B cell (primary cell): ENCODE measurements at regions of chr1 and their contacts with region 1.

Region 1: DNA sequence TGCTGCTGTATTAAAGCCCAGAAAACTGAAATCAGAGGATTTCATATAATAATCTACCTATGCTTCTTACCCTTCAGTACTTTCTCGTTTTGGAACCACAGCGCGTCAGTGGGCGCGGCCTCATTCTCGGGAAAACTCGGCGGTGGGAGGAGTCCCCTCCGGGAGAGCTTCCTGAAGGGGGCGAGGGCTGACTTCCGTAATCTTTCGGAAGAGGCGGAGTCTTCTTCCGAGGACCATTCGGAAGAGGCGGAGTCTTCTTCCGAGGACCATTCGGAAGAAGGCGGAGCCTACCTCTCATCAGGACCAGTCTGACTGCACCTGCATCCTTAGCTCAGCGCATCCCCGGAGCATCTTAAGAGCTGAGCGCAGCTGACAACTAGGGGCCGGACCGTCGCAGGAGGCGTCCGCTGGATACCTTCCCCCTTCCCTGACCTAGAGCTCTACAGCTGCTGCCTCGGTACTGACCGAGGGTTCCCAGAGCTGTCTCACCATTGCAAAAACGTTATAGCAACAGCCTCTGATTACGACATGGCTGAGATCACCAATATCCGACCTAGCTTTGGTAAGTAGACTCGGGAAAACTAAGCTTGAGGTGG is at the start of gene SYT11:
- DNase-seq: peak; percentile 96
- ATAC-seq: peak; percentile 94
- H3K4me3 ChIP-seq: peak within 1 kb of the TSS; percentile 39 to 89 (median 65)
- H3K4me3 Mint-ChIP-seq: peak within 1 kb of the TSS; percentile 97
- H3K27ac ChIP-seq: peak within 1 kb of the TSS; percentile 60 to 68
- H3K27ac Mint-ChIP-seq: peak within 1 kb of the TSS; percentile 96
- H3K4me1 ChIP-seq: peaks cover 12 to 40% of the 10 kb centered on the region in 2 donors
- H3K4me1 Mint-ChIP-seq: peaks cover 29% of the 10 kb centered on the region
- H3K27me3 ChIP-seq: peaks cover 0 to 4% (median 2%) of the 10 kb centered on the region in 4 experiments
- H3K27me3 Mint-ChIP-seq: peaks cover 11% of the 10 kb centered on the region
- CTCF ChIP-seq: peak; percentile 31
- total RNA-seq, gene SYT11: 6.2 and 6.6 TPM in 2 replicates

Region 2: DNA sequence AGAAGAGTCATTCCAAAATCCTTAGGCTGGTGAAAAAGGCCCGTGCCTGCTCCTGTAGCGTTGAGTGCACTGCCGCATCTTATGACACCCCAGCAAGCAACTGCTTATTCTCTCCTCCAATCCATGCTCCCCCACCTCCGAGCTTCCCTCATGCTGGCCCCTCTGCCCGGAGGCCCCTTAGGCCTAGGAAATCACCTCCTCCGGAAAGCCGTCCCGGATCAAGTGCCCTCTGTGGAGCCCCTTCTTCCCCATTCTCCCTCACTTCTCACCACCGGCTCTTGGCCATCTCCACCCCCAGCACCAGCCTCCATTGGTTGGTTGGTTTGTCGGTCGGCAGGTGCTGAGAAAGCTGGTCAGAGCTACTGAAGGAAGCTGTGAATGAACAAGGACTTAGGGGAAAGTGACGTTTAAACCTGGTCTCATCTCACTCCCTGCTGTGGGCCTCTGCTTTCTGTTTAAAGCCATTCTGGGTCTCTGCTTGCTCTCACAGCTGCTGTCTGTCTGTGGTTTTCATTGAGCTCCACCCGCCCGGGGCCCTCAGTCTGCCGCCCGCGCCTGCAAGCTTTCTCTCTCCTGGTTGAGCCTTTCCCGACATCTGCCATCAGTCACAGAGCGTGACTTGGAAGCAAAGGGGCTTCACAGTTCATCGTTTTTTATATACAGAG is 1111.5 kb before region 1 on chr1:
- CTCF ChIA-PET with region 1: no interaction called
- POLR2A ChIA-PET with region 1: no interaction called
- intact Hi-C with region 1: no loop called
- DNase-seq: peak; percentile 35
- ATAC-seq: peak; percentile 14
- H3K4me3 ChIP-seq: no peak overlapping the region
- H3K4me3 Mint-ChIP-seq: peak overlapping the region; percentile 32
- H3K27ac ChIP-seq: no peak overlapping the region
- H3K27ac Mint-ChIP-seq: no peak overlapping the region
- H3K4me1 ChIP-seq: peaks cover 14 to 18% of the 10 kb centered on the region in 2 donors
- H3K4me1 Mint-ChIP-seq: peaks cover 13% of the 10 kb centered on the region
- H3K27me3 ChIP-seq: peaks cover 0 to 32% (median 6%) of the 10 kb centered on the region in 4 experiments
- H3K27me3 Mint-ChIP-seq: peaks cover 65% of the 10 kb centered on the region
- CTCF ChIP-seq: no peak

Region 3: GRCh38 chr1:154936555-154937084 is 922.7 kb before region 1 on chr1 and contains the start of gene PMVK:
- CTCF ChIA-PET with region 1: no interaction called
- POLR2A ChIA-PET with region 1: no interaction called
- intact Hi-C with region 1: loop called (anchors 5 kb)
- DNase-seq: peak; percentile 99
- ATAC-seq: peak; percentile 89
- H3K4me3 ChIP-seq: peak within 1 kb of the TSS; percentile 76 to 90 (median 80)
- H3K4me3 Mint-ChIP-seq: peak within 1 kb of the TSS; percentile 97
- H3K27ac ChIP-seq: peak within 1 kb of the TSS; percentile 98
- H3K27ac Mint-ChIP-seq: peak within 1 kb of the TSS; percentile 100
- H3K4me1 ChIP-seq: peaks cover 32 to 50% of the 10 kb centered on the region in 2 donors
- H3K4me1 Mint-ChIP-seq: peaks cover 51% of the 10 kb centered on the region
- H3K27me3 ChIP-seq: no peaks in the 10 kb centered on the region
- H3K27me3 Mint-ChIP-seq: no peaks in the 10 kb centered on the region
- CTCF ChIP-seq: peak; percentile 40
- total RNA-seq, gene PMVK: 15.0 TPM in 2 replicates

Region 4: DNA sequence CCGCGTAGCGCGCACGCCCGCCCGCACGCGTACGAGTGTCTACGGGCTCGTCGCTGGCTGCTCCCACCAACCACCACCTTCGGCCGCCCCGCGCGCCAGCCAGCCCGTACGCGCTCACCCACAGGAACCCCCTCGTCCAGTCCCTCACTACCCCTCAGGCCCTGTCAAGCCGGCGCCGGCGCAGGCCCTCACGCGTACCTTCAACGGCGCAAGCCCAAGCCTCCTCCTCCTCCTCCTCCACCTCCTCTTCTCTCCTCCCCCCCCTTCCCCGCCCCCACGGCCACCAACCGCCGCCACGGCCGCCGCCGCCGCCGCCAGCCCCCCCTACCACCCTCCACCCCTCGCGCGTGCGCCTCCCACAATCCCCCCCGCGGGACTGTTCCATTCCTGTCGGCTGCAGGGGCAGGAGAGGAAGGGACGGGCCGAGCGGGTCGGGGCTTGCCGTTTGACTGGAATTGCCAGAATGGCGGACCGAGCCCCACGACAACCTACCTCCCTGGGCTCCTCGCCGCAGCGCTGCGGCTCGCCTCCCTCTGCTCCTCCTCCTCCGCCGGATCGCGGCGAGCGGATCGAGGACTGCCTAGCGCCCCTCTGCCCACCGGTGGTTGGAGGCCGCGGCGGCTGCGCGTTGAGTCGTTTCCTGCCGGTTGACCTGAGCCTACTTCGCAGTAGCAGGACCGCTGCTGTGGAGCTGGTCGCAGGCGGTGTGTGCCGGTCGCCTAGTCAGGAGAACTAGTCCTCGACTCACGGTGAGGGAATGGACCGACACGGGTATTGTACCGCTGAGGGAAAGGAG is 296.6 kb before region 1 on chr1 and contains the start of gene ASH1L:
- CTCF ChIA-PET with region 1: no interaction called
- POLR2A ChIA-PET with region 1: no interaction called
- intact Hi-C with region 1: loop called (anchors 5 kb)
- DNase-seq: peak; percentile 98
- ATAC-seq: peak; percentile 76
- H3K4me3 ChIP-seq: peak within 1 kb of the TSS; percentile 83 to 96 (median 92)
- H3K4me3 Mint-ChIP-seq: peak within 1 kb of the TSS; percentile 99
- H3K27ac ChIP-seq: peak within 1 kb of the TSS; percentile 96 to 97
- H3K27ac Mint-ChIP-seq: peak within 1 kb of the TSS; percentile 98
- H3K4me1 ChIP-seq: peaks cover 19 to 27% of the 10 kb centered on the region in 2 donors
- H3K4me1 Mint-ChIP-seq: peaks cover 45% of the 10 kb centered on the region
- H3K27me3 ChIP-seq: no peaks in the 10 kb centered on the region
- H3K27me3 Mint-ChIP-seq: no peaks in the 10 kb centered on the region
- CTCF ChIP-seq: no peak
- total RNA-seq, gene ASH1L: 124 and 128 TPM in 2 replicates

Region 5: DNA sequence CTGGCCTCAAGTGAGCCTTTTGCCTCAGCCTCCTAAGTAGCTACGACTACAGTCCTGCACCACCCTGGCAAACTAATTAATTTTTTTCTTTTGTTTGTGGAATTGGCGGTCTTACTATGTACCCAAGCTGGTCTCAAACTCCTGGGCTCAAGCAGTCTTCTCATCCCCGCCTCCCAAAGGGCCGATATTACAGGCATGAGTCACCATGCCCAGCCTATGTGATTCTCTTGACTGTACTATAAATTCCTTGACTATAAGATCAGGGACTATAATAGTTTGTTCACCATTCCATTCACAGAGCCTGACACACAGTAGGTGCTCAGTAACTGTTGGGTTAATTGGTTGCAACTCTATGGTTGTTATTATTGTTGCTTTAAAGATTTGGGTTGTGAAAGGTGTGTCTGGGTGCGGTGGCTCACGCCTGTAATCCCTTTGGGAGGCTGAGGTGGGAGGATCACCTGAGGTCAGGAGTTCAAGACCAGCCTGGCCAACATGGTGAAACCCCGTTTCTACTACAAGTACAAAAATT is 153.2 kb before region 1 on chr1:
- CTCF ChIA-PET with region 1: no interaction called
- POLR2A ChIA-PET with region 1: interaction called, 11 read pairs
- intact Hi-C with region 1: no loop called
- DNase-seq: no peak
- ATAC-seq: no peak
- H3K4me3 ChIP-seq: no peak overlapping the region
- H3K4me3 Mint-ChIP-seq: no peak overlapping the region
- H3K27ac ChIP-seq: no peak overlapping the region
- H3K27ac Mint-ChIP-seq: no peak overlapping the region
- H3K4me1 ChIP-seq: no peaks in the 10 kb centered on the region
- H3K4me1 Mint-ChIP-seq: peaks cover 8% of the 10 kb centered on the region
- H3K27me3 ChIP-seq: no peaks in the 10 kb centered on the region
- H3K27me3 Mint-ChIP-seq: no peaks in the 10 kb centered on the region
- CTCF ChIP-seq: no peak

Region 6: DNA sequence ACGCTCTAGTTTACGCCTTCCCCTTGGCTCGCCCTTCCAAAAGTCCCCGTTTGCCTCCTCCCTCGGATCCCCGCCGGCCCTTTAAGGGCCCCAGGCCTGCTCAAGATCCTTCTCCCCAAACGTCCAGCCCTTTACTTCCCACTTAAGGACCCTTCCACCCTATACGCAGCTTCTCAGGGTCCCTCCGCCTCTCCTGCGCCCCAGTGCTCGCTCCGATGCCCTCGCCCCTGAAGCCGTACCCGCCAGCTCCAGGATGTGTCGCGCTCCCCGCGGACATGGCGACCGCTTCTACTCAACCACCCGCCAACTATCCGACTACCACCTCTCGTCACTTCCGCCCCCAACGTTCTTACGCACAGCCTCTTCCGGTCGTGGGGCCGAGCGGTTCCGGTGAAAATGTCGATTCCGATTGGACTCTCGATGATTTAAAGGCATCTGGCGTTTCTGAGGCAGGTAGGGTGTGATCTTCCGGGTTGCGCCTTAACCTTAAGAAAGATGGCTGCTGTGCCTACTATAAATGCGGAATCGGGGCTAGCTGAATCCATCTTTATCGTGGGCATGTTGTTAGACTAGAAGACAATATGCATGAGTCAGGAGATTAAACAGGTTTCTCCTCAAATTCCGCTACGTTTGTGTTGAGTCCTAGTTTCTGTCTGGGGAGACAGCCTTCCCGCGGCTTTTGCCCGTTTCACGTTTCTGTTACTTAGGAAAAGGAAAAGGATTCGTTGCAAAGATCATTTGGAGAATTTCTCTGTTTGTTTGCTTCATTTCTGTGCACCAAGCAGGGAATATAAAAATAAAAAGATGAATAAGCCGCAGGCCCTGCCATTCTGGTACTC is 75.0 kb after region 1 on chr1 and contains the start of gene KHDC4:
- CTCF ChIA-PET with region 1: interaction called, 3 read pairs
- POLR2A ChIA-PET with region 1: no interaction called
- intact Hi-C with region 1: loop called (anchors 1 kb)
- DNase-seq: peak; percentile 98
- ATAC-seq: peak; percentile 93
- H3K4me3 ChIP-seq: peak within 1 kb of the TSS; percentile 79 to 97 (median 84)
- H3K4me3 Mint-ChIP-seq: no peak within 1 kb of the TSS
- H3K27ac ChIP-seq: peak within 1 kb of the TSS; percentile 86 to 89
- H3K27ac Mint-ChIP-seq: peak within 1 kb of the TSS; percentile 54
- H3K4me1 ChIP-seq: peaks cover 43 to 55% of the 10 kb centered on the region in 2 donors
- H3K4me1 Mint-ChIP-seq: peaks cover 37% of the 10 kb centered on the region
- H3K27me3 ChIP-seq: no peaks in the 10 kb centered on the region
- H3K27me3 Mint-ChIP-seq: no peaks in the 10 kb centered on the region
- CTCF ChIP-seq: peak; percentile 57
- total RNA-seq, gene KHDC4: 122 TPM in 2 replicates

Region 7: GRCh38 chr1:156020292-156021089 is 161.2 kb after region 1 on chr1 and contains the start of gene SSR2:
- CTCF ChIA-PET with region 1: no interaction called
- POLR2A ChIA-PET with region 1: no interaction called
- intact Hi-C with region 1: loop called (anchors 2 kb)
- DNase-seq: peak; percentile 89
- ATAC-seq: peak; percentile 99
- H3K4me3 ChIP-seq: peak within 1 kb of the TSS; percentile 71 to 87 (median 81)
- H3K4me3 Mint-ChIP-seq: peak within 1 kb of the TSS; percentile 99
- H3K27ac ChIP-seq: peak within 1 kb of the TSS; percentile 59 to 68
- H3K27ac Mint-ChIP-seq: peak within 1 kb of the TSS; percentile 90
- H3K4me1 ChIP-seq: peaks cover 9 to 17% of the 10 kb centered on the region in 2 donors
- H3K4me1 Mint-ChIP-seq: peaks cover 22% of the 10 kb centered on the region
- H3K27me3 ChIP-seq: peaks cover 0 to 6% (median 0%) of the 10 kb centered on the region in 4 experiments
- H3K27me3 Mint-ChIP-seq: peaks cover 6% of the 10 kb centered on the region
- CTCF ChIP-seq: no peak
- total RNA-seq, gene SSR2: 160 and 161 TPM in 2 replicates

Region 8: DNA sequence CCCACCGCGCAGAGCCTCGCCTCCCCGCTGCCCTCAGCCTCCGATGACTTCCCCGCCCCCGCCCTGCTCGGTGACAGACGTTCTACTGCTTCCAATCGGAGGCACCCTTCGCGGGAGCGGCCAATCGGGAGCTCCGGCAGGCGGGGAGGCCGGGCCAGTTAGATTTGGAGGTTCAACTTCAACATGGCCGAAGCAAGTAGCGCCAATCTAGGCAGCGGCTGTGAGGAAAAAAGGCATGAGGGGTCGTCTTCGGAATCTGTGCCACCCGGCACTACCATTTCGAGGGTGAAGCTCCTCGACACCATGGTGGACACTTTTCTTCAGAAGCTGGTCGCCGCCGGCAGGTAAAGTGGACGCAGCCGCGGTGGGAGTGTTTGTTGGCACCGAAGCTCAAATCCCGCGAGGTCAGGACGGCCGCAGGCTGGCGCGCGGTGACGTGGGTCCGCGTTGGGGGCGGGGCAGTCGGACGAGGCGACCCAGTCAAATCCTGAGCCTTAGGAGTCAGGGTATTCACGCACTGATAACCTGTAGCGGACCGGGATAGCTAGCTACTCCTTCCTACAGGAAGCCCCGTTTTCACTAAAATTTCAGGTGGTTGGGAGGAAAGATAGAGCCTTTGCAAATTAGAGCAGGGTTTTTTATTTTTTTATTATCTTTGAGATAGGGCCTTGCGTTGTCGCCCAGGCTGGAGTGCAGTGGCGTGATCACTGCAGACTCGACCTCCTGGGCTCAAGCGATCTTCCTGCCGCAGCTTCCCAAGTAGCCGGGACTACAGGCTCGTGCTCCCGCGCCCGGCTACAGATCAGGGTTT is 353.7 kb after region 1 on chr1 and contains the start of gene PMF1:
- CTCF ChIA-PET with region 1: no interaction called
- POLR2A ChIA-PET with region 1: interaction called, 4 read pairs
- intact Hi-C with region 1: loop called (anchors 5 kb)
- DNase-seq: peak; percentile 97
- ATAC-seq: peak; percentile 97
- H3K4me3 ChIP-seq: peak within 1 kb of the TSS; percentile 75 to 95 (median 81)
- H3K4me3 Mint-ChIP-seq: peak within 1 kb of the TSS; percentile 98
- H3K27ac ChIP-seq: peak within 1 kb of the TSS; percentile 93 to 94
- H3K27ac Mint-ChIP-seq: peak within 1 kb of the TSS; percentile 99
- H3K4me1 ChIP-seq: peaks cover 14 to 19% of the 10 kb centered on the region in 2 donors
- H3K4me1 Mint-ChIP-seq: peaks cover 29% of the 10 kb centered on the region
- H3K27me3 ChIP-seq: no peaks in the 10 kb centered on the region
- H3K27me3 Mint-ChIP-seq: no peaks in the 10 kb centered on the region
- CTCF ChIP-seq: no peak
- total RNA-seq, gene PMF1: 58.3 and 64.3 TPM in 2 replicates